ENCODE measurements at regions of chr2 and their contacts with region 1.

Region 1: DNA sequence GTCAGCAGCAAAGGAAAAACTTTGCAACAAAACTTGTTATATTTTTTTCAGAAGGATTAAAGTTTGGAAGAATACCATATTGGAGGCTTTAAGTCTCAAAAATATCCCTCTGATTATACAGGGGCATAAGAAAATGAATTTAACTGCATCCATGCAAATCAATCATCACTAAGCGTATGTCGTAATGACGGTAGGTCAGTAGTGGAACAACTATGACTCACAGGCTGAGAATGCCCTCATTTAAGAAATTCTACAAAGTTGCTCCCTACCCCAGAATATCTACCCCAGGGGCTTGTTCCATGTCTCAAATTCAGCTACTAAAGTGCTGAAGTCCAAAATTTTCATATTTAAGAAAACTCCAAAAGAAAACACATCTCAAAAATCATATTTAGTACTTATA is 12.5 kb upstream of the NAB1 start:
- DNase-seq: peak in 1 of 14 experiments; percentile 35
- ATAC-seq: no peak
- H3K4me3 ChIP-seq: no peak overlapping the region
- H3K4me3 Mint-ChIP-seq: no peak overlapping the region
- H3K27ac ChIP-seq: no peak overlapping the region
- H3K27ac Mint-ChIP-seq: no peak overlapping the region
- H3K4me1 ChIP-seq: no peaks in the 10 kb centered on the region
- H3K4me1 Mint-ChIP-seq: no peaks in the 10 kb centered on the region
- H3K27me3 ChIP-seq: no peaks in the 10 kb centered on the region
- H3K27me3 Mint-ChIP-seq: no peaks in the 10 kb centered on the region
- CTCF ChIP-seq: no peak

Region 2: GRCh38 chr2:190679813-190680591 is 43.6 kb after region 1 on chr2:
- CTCF ChIA-PET with region 1: interaction called, 25 read pairs
- POLR2A ChIA-PET with region 1: no interaction called
- intact Hi-C with region 1: loop called (anchors 1 to 2 kb)
- DNase-seq: peak; percentile 33 to 81 (median 56)
- ATAC-seq: peak; percentile 73
- H3K4me3 ChIP-seq: no peak overlapping the region
- H3K4me3 Mint-ChIP-seq: no peak overlapping the region
- H3K27ac ChIP-seq: no peak overlapping the region
- H3K27ac Mint-ChIP-seq: peak overlapping the region; percentile 69
- H3K4me1 ChIP-seq: peaks cover 16% of the 10 kb centered on the region
- H3K4me1 Mint-ChIP-seq: peaks cover 46% of the 10 kb centered on the region
- H3K27me3 ChIP-seq: no peaks in the 10 kb centered on the region
- H3K27me3 Mint-ChIP-seq: no peaks in the 10 kb centered on the region
- CTCF ChIP-seq: peak; percentile 74

Region 3: GRCh38 chr2:190804182-190804795 is 167.9 kb after region 1 on chr2:
- CTCF ChIA-PET with region 1: no interaction called
- POLR2A ChIA-PET with region 1: no interaction called
- intact Hi-C with region 1: loop called in 1 of 2 experiments (anchors 5 kb)
- DNase-seq: peak in 4 of 14 experiments; percentile 17 to 31 (median 20)
- ATAC-seq: no peak
- H3K4me3 ChIP-seq: no peak overlapping the region
- H3K4me3 Mint-ChIP-seq: no peak overlapping the region
- H3K27ac ChIP-seq: no peak overlapping the region
- H3K27ac Mint-ChIP-seq: no peak overlapping the region
- H3K4me1 ChIP-seq: no peaks in the 10 kb centered on the region
- H3K4me1 Mint-ChIP-seq: no peaks in the 10 kb centered on the region
- H3K27me3 ChIP-seq: no peaks in the 10 kb centered on the region
- H3K27me3 Mint-ChIP-seq: no peaks in the 10 kb centered on the region
- CTCF ChIP-seq: peak; percentile 55